ENCODE measurements at regions of chr4 and their contacts with region 1.

Region 1: DNA sequence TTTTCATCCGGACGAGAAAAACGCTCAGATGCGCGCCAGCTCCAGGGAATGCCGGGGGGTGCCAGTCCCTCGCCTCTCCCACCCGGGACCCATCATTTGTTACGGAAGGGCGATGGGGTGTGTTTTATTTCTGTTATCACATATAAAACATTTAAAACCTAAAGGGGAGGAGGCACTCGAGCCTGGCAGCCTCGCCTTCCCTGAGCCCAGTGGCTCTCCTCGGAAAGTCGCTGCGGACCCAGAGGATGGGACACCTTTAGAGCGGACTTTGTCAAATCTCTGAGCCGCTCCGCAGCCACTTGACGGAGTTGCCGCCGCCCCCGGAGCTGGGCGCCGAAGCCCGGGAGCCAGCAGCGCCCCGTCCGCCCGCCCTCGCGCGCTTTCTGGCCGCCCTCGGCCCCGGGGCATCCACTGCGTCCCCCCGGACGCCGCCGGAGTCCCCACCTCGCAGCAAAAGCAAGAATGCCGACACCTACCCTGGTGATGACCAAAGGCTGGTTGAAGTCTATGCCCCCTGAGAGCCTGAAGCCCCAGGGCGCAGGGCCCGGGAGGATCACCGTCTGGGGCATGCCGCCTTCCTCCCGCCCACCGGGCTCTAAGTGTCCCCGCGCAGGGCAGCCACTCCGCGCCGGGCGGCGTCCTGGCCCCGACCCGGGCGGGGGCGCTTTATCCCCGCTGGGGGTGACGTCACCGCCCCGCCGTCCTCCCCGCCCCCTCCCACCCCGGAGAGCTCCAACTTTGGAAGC is at the start of gene PDLIM3:
- DNase-seq: peak; percentile 76

Region 2: DNA sequence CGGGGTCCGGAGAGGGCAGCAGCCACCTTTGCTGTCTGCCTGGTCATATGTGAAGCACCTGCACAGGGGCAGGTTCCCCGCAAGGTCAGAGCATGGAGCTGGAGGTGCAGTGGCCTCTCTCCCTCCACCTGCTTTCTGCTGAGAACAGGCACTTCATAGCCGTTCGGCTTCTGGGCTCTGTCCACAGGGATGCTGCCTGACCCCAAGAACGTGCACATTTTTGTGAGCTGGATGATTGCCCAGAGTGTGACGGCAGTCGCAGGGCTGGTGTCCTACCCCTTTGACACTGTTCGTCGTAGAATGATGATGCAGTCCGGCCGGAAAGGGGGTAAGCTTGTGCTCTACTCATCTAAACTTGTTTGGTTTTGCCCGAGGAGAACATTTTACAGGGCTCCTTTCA is 389.5 kb before region 1 on chr4:
- CTCF ChIA-PET with region 1: no interaction called
- POLR2A ChIA-PET with region 1: no interaction called
- DNase-seq: no peak

Region 3: GRCh38 chr4:185573651-185574199 is 38.7 kb after region 1 on chr4:
- CTCF ChIA-PET with region 1: no interaction called
- POLR2A ChIA-PET with region 1: interaction called, 11 read pairs
- DNase-seq: peak; percentile 61